Activated T-helper 2 cell treated with anti-CD3 and anti-CD28 coated beads, Interferon-gamma antibody, Interleukin-2, Interleukin-4, amounts not matched to agents 10 μg/mL and 5 μg/mL and 100 μg/mL, durations not matched to agents 14 hours and 24 hours and 36 hours (primary cell): ENCODE measurements at regions of chr3 and their contacts with region 1.

Region 1: DNA sequence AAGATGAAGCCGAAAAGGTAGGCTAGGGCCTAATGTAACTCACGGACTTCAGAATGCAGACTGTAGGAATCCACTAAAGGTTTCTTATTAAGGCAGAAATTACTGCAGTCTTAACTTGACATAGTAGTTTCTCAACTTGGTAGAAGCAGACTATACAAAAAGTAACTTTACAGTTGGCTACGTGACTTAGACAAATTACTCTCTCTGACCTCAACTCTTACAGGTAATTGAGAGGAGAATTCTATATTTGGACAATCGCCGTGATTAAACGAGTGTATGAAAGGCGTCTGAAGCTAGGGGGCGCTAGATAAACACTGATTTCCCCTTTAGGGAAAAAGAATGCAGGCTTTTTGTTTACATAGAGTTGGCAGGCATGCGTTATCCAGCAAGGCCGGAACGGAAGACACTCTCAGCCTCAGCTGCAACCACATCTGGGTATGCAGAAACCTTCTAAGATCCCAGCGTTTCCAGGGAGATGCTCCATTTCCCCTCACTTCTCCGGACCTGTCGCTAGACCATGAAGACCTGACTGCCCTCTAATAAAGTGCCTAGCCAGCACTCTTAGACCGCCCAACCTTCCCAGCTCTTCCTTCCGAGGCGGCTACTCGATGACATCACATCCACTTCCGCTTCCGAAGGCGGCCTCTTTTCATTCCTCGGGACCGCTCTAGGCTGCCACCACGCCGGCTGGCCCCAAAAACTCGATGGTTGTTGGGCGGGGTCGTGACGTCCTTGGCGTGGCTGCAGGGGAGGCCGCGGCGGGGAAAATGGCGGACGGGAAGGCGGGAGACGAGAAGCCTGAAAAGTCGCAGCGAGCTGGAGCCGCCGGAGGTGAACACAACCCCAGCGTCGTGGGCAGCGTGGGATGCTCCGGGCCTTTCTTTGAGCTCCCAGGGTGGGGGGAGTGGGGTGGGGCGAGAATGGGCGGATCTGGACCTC is at the start of gene PCNP:
- DNase-seq: peak; percentile 99
- H3K4me3 Mint-ChIP-seq: peak within 1 kb of the TSS; percentile 96
- H3K27ac Mint-ChIP-seq: peak within 1 kb of the TSS; percentile 99
- H3K4me1 Mint-ChIP-seq: peaks cover 56% of the 10 kb centered on the region
- H3K27me3 Mint-ChIP-seq: no peaks in the 10 kb centered on the region
- total RNA-seq, gene PCNP: 190 and 192 TPM in 2 replicates

Region 2: DNA sequence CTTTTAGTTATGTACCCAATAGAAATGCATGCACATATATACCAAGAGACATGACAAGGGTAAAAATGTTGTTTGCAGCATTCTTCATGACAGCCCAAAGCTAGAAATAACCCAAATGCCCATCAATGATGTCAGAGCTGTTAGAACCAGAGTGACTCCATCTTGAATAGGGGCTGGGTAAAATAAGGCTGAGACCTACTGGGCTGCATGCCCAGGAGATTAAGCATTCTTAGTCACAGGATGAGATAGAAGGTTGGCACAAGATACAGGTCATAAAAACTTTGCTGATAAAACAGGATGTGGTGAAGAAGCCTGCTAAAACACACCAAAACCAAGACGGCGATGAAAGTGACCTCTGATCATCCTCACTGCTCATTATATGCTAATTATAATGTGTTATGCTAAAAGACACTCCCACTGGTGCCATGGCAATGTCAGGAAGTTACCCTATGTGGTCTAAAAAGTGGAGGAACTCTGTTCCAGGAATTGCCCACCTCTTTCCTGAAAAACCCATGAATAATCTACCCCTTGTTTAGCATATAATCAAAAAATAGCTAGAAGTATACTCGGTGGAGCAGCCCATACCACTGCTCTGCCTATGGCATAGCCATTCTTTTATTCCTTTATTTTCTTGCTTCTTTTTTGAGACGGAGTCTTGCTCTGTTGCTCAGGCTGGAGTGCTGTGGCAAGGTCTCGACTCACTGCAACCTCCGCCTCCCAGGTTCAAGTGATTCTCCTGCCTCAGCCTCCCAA is 70.3 kb after region 1 on chr3:
- intact Hi-C with region 1: loop called (anchors 1 kb)
- DNase-seq: peak; percentile 29
- H3K4me3 Mint-ChIP-seq: peak overlapping the region; percentile 5
- H3K27ac Mint-ChIP-seq: peak overlapping the region; percentile 78
- H3K4me1 Mint-ChIP-seq: peaks cover 24% of the 10 kb centered on the region
- H3K27me3 Mint-ChIP-seq: no peaks in the 10 kb centered on the region